OCI-LY7 (cell line): ENCODE measurements at regions of chr3 and their contacts with region 1.

Region 1: DNA sequence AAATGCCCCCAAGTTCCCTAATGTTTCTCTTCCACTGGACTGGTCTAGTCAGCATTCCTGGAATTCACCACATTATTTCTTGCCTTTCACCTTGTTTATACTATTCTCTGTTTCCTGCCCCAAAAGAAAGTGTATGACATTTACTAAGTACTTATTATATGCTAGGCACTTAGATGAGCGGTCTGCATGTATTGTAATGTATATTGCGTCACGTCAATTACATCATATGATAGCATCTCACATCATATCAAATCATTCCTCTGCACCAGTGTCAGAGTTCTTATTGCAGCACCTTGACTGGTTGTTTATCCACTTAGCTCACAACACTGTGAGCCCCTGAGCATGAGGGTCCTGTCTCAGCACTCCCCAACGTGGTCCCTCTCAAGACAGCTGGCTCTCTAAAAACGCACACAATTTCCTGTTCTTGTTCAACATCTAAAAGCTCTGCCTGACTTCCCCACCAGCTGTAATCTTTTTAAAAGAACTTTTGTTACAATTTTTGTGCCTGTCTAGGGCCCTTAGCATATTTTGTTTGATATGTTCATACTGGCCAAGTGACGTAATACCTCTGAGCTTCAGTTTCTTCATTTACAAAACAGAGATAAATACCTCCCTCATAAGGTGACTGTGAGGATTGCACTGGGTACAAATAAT is 58.8 kb downstream of the ARHGAP31 start:
- DNase-seq: peak; percentile 67
- H3K4me3 ChIP-seq: no peak overlapping the region
- H3K27ac ChIP-seq: peak overlapping the region; percentile 37
- H3K4me1 ChIP-seq: peaks cover 25% of the 10 kb centered on the region
- CTCF ChIP-seq: peak; percentile 66

Region 2: GRCh38 chr3:118884748-118885206 is 468.2 kb before region 1 on chr3:
- CTCF ChIA-PET with region 1: no interaction called
- POLR2A ChIA-PET with region 1: no interaction called
- intact Hi-C with region 1: loop called (anchors 10 kb)
- DNase-seq: peak; percentile 55
- H3K4me3 ChIP-seq: no peak overlapping the region
- H3K27ac ChIP-seq: no peak overlapping the region
- H3K4me1 ChIP-seq: no peaks in the 10 kb centered on the region
- CTCF ChIP-seq: peak; percentile 94

Region 3: GRCh38 chr3:119279101-119279554 is 73.8 kb before region 1 on chr3:
- CTCF ChIA-PET with region 1: interaction called, 10 read pairs
- POLR2A ChIA-PET with region 1: interaction called, 12 read pairs
- intact Hi-C with region 1: loop called (anchors 1 kb)
- DNase-seq: no peak
- H3K4me3 ChIP-seq: no peak overlapping the region
- H3K27ac ChIP-seq: no peak overlapping the region
- H3K4me1 ChIP-seq: no peaks in the 10 kb centered on the region
- CTCF ChIP-seq: no peak

Region 4: DNA sequence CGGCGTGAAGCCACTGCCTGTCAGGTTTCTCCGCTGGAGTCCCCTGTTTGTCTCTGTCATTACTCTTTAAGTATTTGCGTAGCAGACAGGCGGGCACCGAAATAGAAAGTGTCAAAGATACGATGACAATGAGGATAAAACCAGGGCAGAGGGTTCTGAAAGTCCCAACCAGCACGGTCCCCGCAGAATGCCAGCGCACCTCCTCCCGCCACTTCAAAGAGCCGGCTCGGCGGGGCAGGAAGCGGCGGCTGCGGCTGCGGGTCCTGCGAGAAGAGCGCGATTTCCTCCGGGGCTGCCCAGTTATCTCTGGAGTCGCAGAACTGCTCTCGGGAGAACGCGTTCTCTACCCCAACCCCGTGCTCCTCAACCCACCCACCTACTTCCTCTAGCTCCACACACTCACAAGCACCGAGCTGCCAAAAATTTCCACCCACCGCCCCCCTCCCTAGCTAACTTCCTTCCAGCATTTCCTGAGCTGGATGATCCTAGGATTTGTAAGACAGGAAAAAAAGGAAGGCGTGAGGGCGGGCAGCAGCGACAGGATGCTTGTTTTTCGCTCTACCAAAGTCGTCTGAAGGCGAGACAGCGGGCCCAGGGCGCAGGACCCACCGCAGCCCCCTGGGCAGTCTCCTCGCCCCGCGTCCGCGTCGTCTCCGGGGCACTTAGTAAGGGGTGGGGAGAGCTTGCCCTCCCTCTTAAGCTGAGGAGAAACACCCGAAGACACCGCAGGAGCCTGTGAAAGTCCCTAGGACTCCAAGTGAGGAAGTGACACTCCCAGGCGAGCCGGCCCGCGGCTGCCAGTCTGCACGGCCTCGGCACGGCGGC is 58.9 kb before region 1 on chr3 and contains the start of gene ARHGAP31:
- CTCF ChIA-PET with region 1: interaction called, 3 read pairs
- POLR2A ChIA-PET with region 1: interaction called, 3 read pairs
- intact Hi-C with region 1: loop called (anchors 5 kb)
- DNase-seq: peak; percentile 70
- H3K4me3 ChIP-seq: peak within 1 kb of the TSS; percentile 71
- H3K27ac ChIP-seq: peak within 1 kb of the TSS; percentile 44
- H3K4me1 ChIP-seq: peaks cover 37% of the 10 kb centered on the region
- CTCF ChIP-seq: no peak
- total RNA-seq, gene ARHGAP31: 4.1 TPM in 2 replicates